ENCODE measurements at regions of chrX and their contacts with region 1.

Region 1: GRCh38 chrX:37603938-37604409 is 32.5 kb downstream of the LANCL3 start:
- DNase-seq: no peak
- ATAC-seq: no peak
- H3K4me3 ChIP-seq: no peak overlapping the region
- H3K27ac ChIP-seq: no peak overlapping the region
- H3K4me1 ChIP-seq: peaks cover 26% of the 10 kb centered on the region
- H3K27me3 ChIP-seq: no peaks in the 10 kb centered on the region
- CTCF ChIP-seq: no peak

Region 2: DNA sequence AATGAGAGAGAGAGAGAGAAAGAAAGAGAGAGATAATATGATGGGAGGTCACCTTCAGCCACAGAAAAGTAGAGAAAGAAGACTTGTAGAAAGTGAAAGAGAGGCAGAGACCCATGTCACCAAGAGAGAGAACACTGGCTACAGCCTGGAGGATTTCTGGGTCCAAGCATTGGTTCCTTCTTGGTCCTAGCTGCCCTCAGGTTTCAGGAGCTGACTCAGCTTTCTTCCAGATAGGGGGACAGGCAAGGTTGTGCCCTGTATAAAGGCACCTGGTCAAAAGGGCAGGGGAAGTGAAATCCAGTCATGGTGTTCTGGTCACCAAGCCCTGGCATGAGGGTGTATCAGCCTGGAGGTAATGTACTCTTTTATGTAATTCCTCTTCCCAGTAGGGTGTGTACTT is 34.1 kb after region 1 on chrX:
- CTCF ChIA-PET with region 1: no interaction called
- POLR2A ChIA-PET with region 1: no interaction called
- intact Hi-C with region 1: no loop called
- DNase-seq: no peak
- ATAC-seq: no peak
- H3K4me3 ChIP-seq: no peak overlapping the region
- H3K27ac ChIP-seq: no peak overlapping the region
- H3K4me1 ChIP-seq: no peaks in the 10 kb centered on the region
- H3K27me3 ChIP-seq: no peaks in the 10 kb centered on the region
- CTCF ChIP-seq: no peak

Region 3: GRCh38 chrX:37666516-37666915 is 62.5 kb after region 1 on chrX:
- CTCF ChIA-PET with region 1: no interaction called
- POLR2A ChIA-PET with region 1: no interaction called
- intact Hi-C with region 1: loop called (anchors 10 kb)
- DNase-seq: peak; percentile 61
- ATAC-seq: peak; percentile 72
- H3K4me3 ChIP-seq: no peak overlapping the region
- H3K27ac ChIP-seq: peak overlapping the region; percentile 81
- H3K4me1 ChIP-seq: peaks cover 18% of the 10 kb centered on the region
- H3K27me3 ChIP-seq: no peaks in the 10 kb centered on the region
- CTCF ChIP-seq: no peak

Measured in PC-3 (cell line).